OCI-LY7 (cell line): ENCODE measurements at regions of chrX and their contacts with region 1.

Region 1: DNA sequence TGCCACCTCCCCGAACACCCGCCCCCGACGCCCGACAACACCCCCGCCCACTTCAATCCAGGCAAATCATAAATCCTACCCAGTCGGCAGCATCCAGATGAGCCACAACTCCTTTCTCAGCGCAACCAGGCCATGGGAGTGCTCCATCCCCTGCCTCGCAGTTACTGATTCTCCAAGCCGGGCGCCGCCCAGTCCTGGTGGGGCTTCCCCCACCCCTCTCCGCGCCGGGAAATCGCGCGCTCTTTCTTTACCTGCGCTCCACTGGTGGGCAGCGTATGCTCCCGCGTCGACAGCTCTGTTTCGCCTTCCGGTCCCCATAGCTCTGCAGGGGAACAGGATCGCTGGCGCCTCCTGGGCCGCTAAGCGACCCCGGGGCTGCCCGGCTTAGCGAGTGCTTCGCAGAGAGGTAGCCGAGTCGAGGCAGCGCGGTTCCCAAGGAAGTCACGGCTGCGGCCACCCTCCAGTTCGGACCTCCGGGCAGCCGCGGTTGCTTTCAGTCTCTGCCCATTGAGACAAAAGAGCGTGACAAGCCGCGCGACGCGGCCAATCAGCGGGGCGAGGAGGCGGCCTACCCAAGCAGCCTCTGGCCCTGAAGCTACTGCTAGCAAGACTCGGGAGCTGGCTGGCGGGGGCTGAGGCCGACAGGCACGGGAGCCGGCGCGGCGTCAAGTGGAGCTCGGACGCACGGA is 43.7 kb upstream of the TMSB15B start:
- DNase-seq: peak; percentile 75
- H3K4me3 ChIP-seq: peak overlapping the region; percentile 78
- H3K27ac ChIP-seq: peak overlapping the region; percentile 84
- H3K4me1 ChIP-seq: peaks cover 12% of the 10 kb centered on the region
- CTCF ChIP-seq: no peak

Region 2: DNA sequence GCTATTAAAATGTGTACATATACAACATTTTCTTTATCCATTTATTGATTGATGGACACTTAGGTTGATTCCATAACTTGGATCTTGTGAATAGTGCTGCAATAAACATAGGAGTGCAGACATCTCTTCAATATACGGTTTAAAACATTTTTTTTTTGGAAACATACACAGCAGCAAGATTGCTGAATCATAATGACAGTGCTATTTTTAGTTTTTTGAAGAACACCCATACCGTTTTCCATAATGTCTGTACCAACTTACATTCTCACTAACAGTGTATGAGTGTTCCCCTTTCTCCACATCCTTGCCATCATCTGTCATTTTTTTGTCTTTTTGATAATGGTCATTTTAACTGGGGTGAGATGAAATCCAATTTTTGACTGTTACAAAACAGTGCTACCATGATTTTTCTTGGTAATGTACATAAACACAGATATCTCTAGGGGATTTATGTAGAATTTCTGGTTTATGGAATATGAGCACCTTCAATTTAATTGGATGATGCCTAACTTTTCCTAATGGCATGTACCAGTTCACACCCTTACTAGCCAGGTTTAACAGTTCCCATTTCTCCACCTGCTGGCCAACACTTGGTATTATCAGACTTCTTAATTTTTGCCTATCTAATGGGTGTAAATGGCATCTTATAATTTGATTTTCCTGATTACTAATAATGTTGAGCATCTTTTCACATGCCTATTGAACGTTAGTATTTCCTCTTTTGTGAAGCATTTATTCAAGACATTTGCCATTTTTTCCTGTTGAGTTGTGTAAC is 22.7 kb after region 1 on chrX:
- CTCF ChIA-PET with region 1: no interaction called
- POLR2A ChIA-PET with region 1: interaction called, 4 read pairs
- intact Hi-C with region 1: loop called (anchors 1 kb)
- DNase-seq: peak; percentile 34
- H3K4me3 ChIP-seq: no peak overlapping the region
- H3K27ac ChIP-seq: no peak overlapping the region
- H3K4me1 ChIP-seq: no peaks in the 10 kb centered on the region
- CTCF ChIP-seq: peak; percentile 71

Region 3: DNA sequence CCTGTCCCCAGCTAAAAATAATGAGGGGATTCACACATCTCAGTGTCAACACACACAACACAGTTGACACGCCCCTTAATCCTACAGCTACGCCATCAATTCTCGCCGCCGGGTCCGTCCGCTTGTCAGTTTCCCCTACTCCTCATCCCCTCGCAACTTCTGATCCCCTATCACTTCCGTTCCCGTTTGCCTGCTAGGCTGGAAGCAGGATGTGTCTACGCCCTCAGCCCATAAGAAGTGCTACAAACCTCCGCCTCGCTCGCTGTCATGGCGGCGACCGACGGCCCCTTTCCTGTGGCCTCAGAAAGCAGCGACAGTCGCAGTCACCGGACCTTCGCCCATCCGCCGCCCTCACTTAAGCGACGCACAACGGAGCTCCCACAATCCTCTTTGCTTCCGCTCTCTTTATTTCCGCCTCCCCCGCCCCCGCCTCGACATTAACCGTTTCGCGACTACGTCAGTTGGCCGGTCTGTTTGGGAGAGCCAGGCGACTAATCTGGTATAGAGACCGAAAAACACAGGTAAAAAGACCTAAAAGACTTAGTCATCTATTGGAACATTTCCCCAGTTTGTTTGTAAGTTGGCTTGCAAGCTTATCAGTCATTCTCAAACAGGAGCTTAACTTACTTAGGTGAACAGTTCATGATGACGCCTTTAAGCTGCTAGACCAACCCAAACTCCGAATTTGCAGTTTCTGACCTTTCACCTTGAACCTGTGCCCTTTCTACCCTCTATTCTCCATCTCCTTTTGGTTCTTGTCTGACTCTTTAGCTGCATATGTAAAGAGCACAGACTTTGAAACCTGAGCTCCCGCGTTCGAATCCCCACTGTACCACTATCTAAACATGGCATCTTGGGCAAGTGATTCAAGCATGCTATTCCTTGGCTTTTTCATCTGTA is 238.2 kb after region 1 on chrX and contains the start of gene SLC25A53:
- CTCF ChIA-PET with region 1: no interaction called
- POLR2A ChIA-PET with region 1: interaction called, 3 read pairs
- intact Hi-C with region 1: loop called (anchors 2 kb)
- DNase-seq: peak; percentile 87
- H3K4me3 ChIP-seq: peak within 1 kb of the TSS; percentile 78
- H3K27ac ChIP-seq: peak within 1 kb of the TSS; percentile 87
- H3K4me1 ChIP-seq: peaks cover 6% of the 10 kb centered on the region
- CTCF ChIP-seq: no peak
- total RNA-seq, gene SLC25A53: 15.6 and 23.1 TPM in 2 replicates